Activated T-helper 1 cell treated with anti-CD3 and anti-CD28 coated beads, Interleukin-12 subunit alpha, Interleukin-12 subunit beta, Interleukin-2, Interleukin-4 antibody, amounts not matched to agents 30 ng/mL and 10 ng/mL and 1 ng/mL, durations not matched to agents 14 hours and 24 hours and 36 hours (primary cell): ENCODE measurements at regions of chr4 and their contacts with region 1.

Region 1: GRCh38 chr4:142379277-142380057 is 466.6 kb downstream of the INPP4B start:
- DNase-seq: no peak
- H3K4me3 Mint-ChIP-seq: no peak overlapping the region
- H3K27ac Mint-ChIP-seq: no peak overlapping the region
- H3K4me1 Mint-ChIP-seq: peaks cover 61% of the 10 kb centered on the region
- H3K27me3 Mint-ChIP-seq: no peaks in the 10 kb centered on the region

Region 2: GRCh38 chr4:142265536-142265935 is 113.9 kb before region 1 on chr4:
- intact Hi-C with region 1: no loop called
- DNase-seq: no peak
- H3K4me3 Mint-ChIP-seq: no peak overlapping the region
- H3K27ac Mint-ChIP-seq: peak overlapping the region; percentile 25
- H3K4me1 Mint-ChIP-seq: peaks cover 44% of the 10 kb centered on the region
- H3K27me3 Mint-ChIP-seq: no peaks in the 10 kb centered on the region

Region 3: GRCh38 chr4:142353149-142353738 is 26.2 kb before region 1 on chr4:
- intact Hi-C with region 1: loop called (anchors 1 kb)
- DNase-seq: no peak
- H3K4me3 Mint-ChIP-seq: peak overlapping the region; percentile 42
- H3K27ac Mint-ChIP-seq: no peak overlapping the region
- H3K4me1 Mint-ChIP-seq: peaks cover 78% of the 10 kb centered on the region
- H3K27me3 Mint-ChIP-seq: no peaks in the 10 kb centered on the region

Region 4: DNA sequence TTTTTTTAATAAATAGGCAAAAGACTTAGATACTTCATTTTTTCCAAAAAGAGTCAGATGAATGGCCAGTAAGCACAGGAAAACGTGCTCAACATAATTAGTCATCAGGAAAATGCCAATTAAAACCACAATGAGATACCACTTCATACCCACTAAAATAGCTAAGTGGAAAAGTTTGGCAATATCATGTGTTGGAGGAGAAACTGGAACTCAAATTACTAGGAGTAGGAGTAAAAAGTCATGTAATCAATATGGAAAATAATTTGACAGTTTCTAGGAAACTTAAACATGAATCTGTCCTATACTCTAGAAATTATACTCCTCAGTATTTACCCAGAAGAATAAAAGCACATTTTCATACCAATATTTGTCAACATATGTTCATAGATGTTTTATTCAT is 16.8 kb after region 1 on chr4:
- intact Hi-C with region 1: loop called (anchors 1 kb)
- DNase-seq: no peak
- H3K4me3 Mint-ChIP-seq: peak overlapping the region; percentile 53
- H3K27ac Mint-ChIP-seq: peak overlapping the region; percentile 89
- H3K4me1 Mint-ChIP-seq: peaks cover 61% of the 10 kb centered on the region
- H3K27me3 Mint-ChIP-seq: no peaks in the 10 kb centered on the region

Region 5: DNA sequence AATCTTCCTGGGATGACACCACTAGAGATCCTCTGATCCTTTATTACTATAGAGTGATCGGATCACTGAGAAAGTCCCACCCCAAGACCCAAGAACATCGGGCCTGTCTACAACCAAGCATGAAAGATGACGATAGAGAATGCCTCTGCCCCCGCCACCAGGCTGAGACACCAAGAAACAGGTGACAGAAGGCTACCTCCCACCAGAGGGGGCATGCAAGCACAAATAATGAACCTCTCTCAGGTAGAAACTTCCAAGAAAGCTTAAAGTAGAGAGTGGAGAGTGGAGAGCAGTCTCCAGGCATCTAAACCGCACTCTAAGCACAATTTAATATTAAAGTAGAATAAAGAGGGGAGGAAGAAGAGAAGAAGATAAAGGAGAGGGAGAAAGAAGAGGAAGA is 64.0 kb after region 1 on chr4:
- intact Hi-C with region 1: no loop called
- DNase-seq: no peak
- H3K4me3 Mint-ChIP-seq: no peak overlapping the region
- H3K27ac Mint-ChIP-seq: no peak overlapping the region
- H3K4me1 Mint-ChIP-seq: peaks cover 10% of the 10 kb centered on the region
- H3K27me3 Mint-ChIP-seq: no peaks in the 10 kb centered on the region

Region 6: DNA sequence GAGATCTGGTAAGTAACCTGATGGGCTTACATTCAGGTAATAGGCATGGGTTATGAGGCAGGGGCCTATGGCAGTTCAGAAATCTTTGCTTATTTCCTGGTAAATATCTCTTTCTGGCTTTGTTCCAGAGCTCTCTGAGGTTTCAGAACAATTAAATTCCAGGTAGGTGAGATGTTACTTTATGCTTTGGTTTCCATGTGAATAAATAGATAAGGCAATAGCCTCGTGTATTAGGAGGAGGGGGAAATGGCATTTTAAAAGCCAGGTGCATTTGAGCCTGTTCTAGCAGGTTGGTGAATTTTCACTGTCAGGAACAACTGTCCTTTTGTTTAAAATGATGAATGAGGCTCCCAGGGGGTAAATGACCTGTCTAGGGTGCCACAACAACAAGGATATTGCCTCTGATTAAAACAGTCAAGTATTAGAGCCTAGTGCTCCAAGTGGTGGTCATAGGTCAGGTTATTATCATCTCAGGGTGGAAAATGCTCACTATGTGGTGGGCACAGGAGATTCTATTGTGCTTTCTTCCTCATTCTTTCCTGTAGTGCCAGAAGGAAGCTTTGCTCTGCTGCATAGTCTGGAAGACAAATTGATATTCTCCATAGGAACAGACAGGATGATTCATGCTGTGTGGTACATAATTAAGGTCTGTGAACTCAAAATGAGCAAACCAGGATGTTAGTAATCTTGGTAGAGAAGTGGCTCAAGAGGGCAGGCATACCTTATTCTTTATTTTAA is 170.4 kb after region 1 on chr4:
- intact Hi-C with region 1: loop called (anchors 2 kb)
- DNase-seq: no peak
- H3K4me3 Mint-ChIP-seq: no peak overlapping the region
- H3K27ac Mint-ChIP-seq: peak overlapping the region; percentile 10
- H3K4me1 Mint-ChIP-seq: peaks cover 41% of the 10 kb centered on the region
- H3K27me3 Mint-ChIP-seq: no peaks in the 10 kb centered on the region